ENCODE measurements at regions of chr20 and their contacts with region 1.

Region 1: GRCh38 chr20:1651268-1652058 is 6.1 kb downstream of the SIRPG start:
- DNase-seq: no peak
- H3K4me3 Mint-ChIP-seq: no peak overlapping the region
- H3K27ac Mint-ChIP-seq: peak overlapping the region; percentile 46
- H3K4me1 Mint-ChIP-seq: peaks cover 83% of the 10 kb centered on the region
- H3K27me3 Mint-ChIP-seq: no peaks in the 10 kb centered on the region

Region 2: GRCh38 chr20:1631309-1632151 is 19.9 kb before region 1 on chr20:
- CTCF ChIA-PET with region 1: interaction called, 4 read pairs
- POLR2A ChIA-PET with region 1: no interaction called
- intact Hi-C with region 1: loop called (anchors 2 kb)
- DNase-seq: no peak
- H3K4me3 Mint-ChIP-seq: peak overlapping the region; percentile 0
- H3K27ac Mint-ChIP-seq: peak overlapping the region; percentile 55
- H3K4me1 Mint-ChIP-seq: peaks cover 63% of the 10 kb centered on the region
- H3K27me3 Mint-ChIP-seq: no peaks in the 10 kb centered on the region

Region 3: GRCh38 chr20:1663917-1664316 is 12.5 kb after region 1 on chr20:
- CTCF ChIA-PET with region 1: no interaction called
- POLR2A ChIA-PET with region 1: interaction called, 7 read pairs
- intact Hi-C with region 1: loop called (anchors 1 kb)
- DNase-seq: peak; percentile 42
- H3K4me3 Mint-ChIP-seq: peak overlapping the region; percentile 52
- H3K27ac Mint-ChIP-seq: peak overlapping the region; percentile 93
- H3K4me1 Mint-ChIP-seq: peaks cover 94% of the 10 kb centered on the region
- H3K27me3 Mint-ChIP-seq: no peaks in the 10 kb centered on the region

Region 4: GRCh38 chr20:1685304-1686052 is 34.0 kb after region 1 on chr20:
- CTCF ChIA-PET with region 1: no interaction called
- POLR2A ChIA-PET with region 1: no interaction called
- intact Hi-C with region 1: loop called (anchors 5 kb)
- DNase-seq: no peak
- H3K4me3 Mint-ChIP-seq: peak overlapping the region; percentile 65
- H3K27ac Mint-ChIP-seq: peak overlapping the region; percentile 64
- H3K4me1 Mint-ChIP-seq: peaks cover 56% of the 10 kb centered on the region
- H3K27me3 Mint-ChIP-seq: no peaks in the 10 kb centered on the region

Region 5: GRCh38 chr20:1987826-1988225 is 336.4 kb after region 1 on chr20:
- CTCF ChIA-PET with region 1: no interaction called
- POLR2A ChIA-PET with region 1: no interaction called
- intact Hi-C with region 1: no loop called
- DNase-seq: no peak
- H3K4me3 Mint-ChIP-seq: no peak overlapping the region
- H3K27ac Mint-ChIP-seq: no peak overlapping the region
- H3K4me1 Mint-ChIP-seq: no peaks in the 10 kb centered on the region
- H3K27me3 Mint-ChIP-seq: peaks cover 32% of the 10 kb centered on the region